Cardiac septum (tissue), 1 donor: ENCODE measurements at regions of chr12 and their contacts with region 1.

Region 1: GRCh38 chr12:110613771-110614684 is at the start of gene TCTN1:
- DNase-seq: peak; percentile 100
- total RNA-seq, gene TCTN1: 20.7 TPM

Region 2: GRCh38 chr12:110689281-110690126 is 75.5 kb after region 1 on chr12:
- intact Hi-C with region 1: loop called (anchors 5 kb)
- DNase-seq: peak; percentile 85

Region 3: DNA sequence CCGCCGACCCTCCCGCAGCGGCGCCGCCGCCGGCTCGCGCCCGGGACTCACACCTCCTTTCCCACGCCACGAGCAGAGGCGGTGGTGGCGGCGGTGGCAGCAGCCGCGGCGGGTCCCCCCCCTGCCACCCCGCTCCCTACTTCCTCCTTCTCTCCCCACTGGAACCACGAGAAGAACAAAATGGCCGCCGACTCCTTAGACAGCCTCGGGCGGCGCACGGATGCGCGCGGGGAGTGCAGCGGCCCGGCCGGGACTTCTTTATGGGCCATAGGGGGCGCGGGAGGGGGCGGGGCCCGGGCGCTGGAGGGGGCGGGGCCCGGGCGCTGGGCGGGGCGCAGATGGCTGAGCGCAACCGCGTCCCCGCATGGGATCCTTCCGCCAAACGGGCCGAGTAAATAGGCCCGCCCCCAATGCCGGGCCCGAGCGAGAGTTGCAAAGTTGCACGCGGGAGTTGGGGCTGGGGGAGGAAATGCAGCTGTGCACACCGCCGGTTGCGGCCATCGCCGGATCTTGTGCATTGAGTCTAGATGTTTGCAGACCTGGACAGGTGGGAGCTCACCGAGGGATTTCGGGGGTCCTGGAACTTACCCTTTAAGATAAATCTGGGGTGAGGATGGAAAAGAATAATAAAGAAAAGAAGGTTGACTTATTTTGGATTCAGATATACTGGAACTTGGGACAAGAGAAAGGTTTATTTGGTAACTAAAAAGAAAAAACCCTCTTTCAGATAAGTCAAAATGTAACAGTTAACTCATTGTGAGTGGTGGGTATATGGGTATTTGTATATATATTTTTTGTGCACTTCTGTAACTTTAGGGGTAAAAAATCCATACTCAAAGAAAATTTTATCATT is 128.9 kb after region 1 on chr12 and contains the start of gene PPP1CC:
- intact Hi-C with region 1: loop called (anchors 5 kb)
- DNase-seq: peak; percentile 97
- total RNA-seq, gene PPP1CC: 102 TPM

Region 4: GRCh38 chr12:110888256-110888991 is 274.4 kb after region 1 on chr12:
- intact Hi-C with region 1: loop called (anchors 5 kb)
- DNase-seq: no peak